GM10248 (cell line): ENCODE measurements at regions of chr2 and their contacts with region 1.

Region 1: GRCh38 chr2:160561551-160562295 is 68.1 kb upstream of the RBMS1 start:
- DNase-seq: no peak
- CTCF ChIP-seq: no peak

Region 2: GRCh38 chr2:160457588-160457987 is 104.1 kb before region 1 on chr2:
- CTCF ChIA-PET with region 1: no interaction called
- POLR2A ChIA-PET with region 1: no interaction called
- DNase-seq: no peak
- CTCF ChIP-seq: no peak

Region 3: GRCh38 chr2:160551259-160551658 is 10.5 kb before region 1 on chr2:
- CTCF ChIA-PET with region 1: interaction called, 11 read pairs
- POLR2A ChIA-PET with region 1: no interaction called
- DNase-seq: no peak
- CTCF ChIP-seq: no peak